ENCODE measurements at regions of chr1 and their contacts with region 1.

Region 1: DNA sequence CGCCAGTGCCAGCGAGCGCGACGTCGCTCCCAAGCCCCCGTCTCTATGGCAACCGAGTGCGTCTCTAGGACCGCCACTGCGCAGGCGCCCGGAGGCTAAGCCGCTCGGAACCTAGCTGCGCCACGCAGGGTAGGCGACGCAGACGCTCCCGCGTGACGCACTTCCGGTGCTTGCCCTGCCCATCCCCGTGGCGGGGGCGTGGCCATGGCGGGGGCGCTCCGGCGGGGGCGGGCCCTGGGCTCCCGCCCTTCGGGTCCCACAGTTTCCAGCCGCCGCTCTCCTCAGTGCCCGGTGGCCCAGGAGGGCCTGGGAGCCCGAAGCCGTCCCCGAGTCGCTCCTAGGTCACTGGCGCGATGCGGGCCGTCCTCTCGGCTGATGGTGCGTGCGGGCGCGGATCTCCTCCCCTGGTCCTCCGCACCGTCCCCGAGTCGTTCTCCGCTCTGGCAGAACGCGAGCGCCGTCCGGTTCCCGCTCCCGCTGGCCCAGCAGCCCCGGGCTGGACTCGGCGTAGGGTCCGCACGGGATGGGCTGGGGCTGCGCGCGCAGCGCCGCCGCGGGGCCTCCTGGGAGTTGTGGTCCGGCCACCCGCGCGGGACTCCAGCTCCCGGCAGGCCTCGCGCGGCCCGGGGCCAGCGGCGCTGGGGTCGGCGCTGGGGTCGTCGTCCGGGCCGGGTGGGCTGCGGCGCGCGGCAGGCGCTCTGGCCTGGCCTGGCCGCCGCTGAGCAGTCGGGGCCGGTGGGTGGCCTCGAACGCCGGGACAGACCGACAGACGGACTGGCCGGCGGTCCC is at the start of gene MIB2:
- DNase-seq: peak; percentile 99
- H3K4me3 ChIP-seq: peak within 1 kb of the TSS; percentile 85
- H3K27ac ChIP-seq: peak within 1 kb of the TSS; percentile 87
- H3K4me1 ChIP-seq: peaks cover 26% of the 10 kb centered on the region
- CTCF ChIP-seq: no peak
- total RNA-seq, gene MIB2: 46.4 and 64.9 TPM in 2 replicates

Region 2: GRCh38 chr1:1574721-1575537 is 40.5 kb before region 1 on chr1 and contains the start of gene SSU72:
- CTCF ChIA-PET with region 1: no interaction called
- POLR2A ChIA-PET with region 1: no interaction called
- intact Hi-C with region 1: loop called (anchors 5 kb)
- DNase-seq: peak; percentile 96
- H3K4me3 ChIP-seq: peak within 1 kb of the TSS; percentile 88
- H3K27ac ChIP-seq: peak within 1 kb of the TSS; percentile 69
- H3K4me1 ChIP-seq: peaks cover 13% of the 10 kb centered on the region
- CTCF ChIP-seq: no peak
- total RNA-seq, gene SSU72: 97.7 and 101 TPM in 2 replicates

Region 3: GRCh38 chr1:1890506-1891348 is 275.3 kb after region 1 on chr1 and contains the start of gene GNB1:
- CTCF ChIA-PET with region 1: no interaction called
- POLR2A ChIA-PET with region 1: no interaction called
- intact Hi-C with region 1: no loop called
- DNase-seq: peak; percentile 96
- H3K4me3 ChIP-seq: peak within 1 kb of the TSS; percentile 97
- H3K27ac ChIP-seq: peak within 1 kb of the TSS; percentile 82
- H3K4me1 ChIP-seq: peaks cover 60% of the 10 kb centered on the region
- CTCF ChIP-seq: no peak
- total RNA-seq, gene GNB1: 86.9 and 101 TPM in 2 replicates